RWPE1 (cell line): ENCODE measurements at regions of chr5 and their contacts with region 1.

Region 1: DNA sequence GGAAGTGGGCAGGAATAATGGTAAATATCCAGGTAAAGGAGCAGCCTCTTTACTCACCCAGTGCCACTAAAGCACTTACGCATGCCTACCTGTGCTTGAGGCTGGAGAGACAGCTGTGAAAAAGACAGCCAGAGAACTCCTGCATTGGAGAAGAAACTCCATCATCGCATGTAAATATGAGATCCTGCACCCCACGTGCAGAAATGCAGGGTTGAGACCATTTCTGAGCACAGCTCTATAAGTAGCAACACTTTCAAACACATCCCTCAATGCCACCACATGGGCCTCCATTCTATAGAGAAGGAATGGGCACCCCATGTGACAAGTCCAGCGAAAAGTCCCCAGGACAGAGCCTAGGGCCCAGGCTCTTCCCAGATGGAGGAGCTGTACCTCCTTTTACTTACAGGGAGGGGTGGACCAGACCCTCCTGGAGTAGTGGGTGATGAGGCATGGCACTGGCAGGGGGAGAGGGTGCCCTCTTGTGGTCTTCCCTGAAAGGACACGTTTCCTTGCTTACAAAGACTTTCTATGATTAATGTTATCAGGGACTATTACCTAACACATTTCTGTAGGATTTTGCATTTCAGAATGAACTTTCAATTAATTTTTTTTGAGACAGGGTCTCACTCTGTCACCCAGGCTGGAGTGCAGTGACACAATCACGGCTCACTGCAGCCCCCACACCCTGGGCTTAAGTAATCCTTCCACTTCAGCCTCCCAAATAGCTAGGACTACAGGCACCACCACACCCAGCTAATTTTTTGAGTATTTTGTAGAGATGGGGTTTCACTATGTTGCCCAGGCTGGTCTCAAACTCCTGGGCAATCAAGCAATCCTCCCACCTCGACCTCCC is 55.3 kb upstream of the IL17B start:
- DNase-seq: peak; percentile 86
- H3K27ac ChIP-seq: peak overlapping the region; percentile 23
- CTCF ChIP-seq: peak; percentile 94

Region 2: DNA sequence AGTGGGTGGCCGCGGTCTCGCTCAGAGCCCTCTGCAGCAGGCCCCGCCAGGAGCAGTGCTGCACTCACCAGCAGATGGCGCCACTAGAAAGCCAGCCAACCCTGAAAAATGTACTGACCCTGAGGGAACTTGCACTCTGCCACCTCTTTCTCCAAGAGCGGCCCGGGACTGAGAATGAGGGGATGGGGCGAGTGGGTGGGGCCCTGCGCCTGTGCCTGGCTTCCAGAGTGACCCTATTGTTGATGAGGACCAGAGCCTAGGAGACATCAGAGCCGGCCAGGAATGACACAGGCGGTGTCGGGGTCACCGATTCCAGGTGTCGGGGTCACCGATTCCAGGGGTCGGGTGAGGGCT is 52.4 kb before region 1 on chr5:
- CTCF ChIA-PET with region 1: interaction called, 15 read pairs
- POLR2A ChIA-PET with region 1: no interaction called
- DNase-seq: peak; percentile 89
- H3K27ac ChIP-seq: peak overlapping the region; percentile 42
- CTCF ChIP-seq: peak; percentile 99